ENCODE measurements at regions of chr2 and their contacts with region 1.

Region 1: DNA sequence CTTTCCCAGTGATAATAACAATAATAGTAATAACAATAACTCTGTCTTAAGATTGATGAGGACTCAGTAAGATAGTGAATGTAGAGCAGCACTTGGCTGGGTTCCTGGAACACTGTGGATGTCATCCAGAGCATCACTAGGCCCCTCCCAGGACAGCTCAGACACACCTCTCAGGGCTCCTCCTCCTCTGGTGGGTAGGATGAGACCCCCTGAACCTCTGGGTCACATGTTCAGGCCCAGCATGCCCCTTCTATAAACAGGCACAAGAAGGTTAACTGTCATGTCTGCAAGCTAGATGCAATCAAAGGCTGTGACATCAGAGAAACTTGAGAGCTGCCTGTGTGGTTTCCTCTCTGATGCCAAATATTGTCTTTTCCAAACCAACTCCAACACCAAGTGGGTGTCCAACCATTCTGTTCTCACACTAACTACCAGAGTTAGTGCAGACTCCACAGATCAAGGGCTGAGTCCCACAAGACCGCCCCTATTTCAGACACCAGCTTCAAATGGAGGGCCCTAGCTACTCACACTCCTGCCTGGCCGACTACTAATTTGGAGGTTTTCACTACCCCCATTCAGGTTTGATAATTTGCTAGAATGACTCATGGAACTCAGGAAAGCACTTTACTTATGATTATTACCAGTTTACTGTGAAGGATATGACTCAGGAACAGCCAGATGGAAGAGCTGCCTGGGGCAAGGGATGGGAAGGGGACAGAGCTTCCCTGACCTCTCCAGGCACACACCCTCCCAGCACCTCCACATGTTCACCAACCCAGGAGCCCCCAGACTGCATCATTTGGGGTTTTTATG is 46.4 kb upstream of the BZW1 start:
- DNase-seq: peak; percentile 89
- H3K4me3 ChIP-seq: no peak overlapping the region
- H3K27ac ChIP-seq: peak overlapping the region; percentile 93
- H3K4me1 ChIP-seq: peaks cover 51% of the 10 kb centered on the region
- H3K27me3 ChIP-seq: no peaks in the 10 kb centered on the region
- CTCF ChIP-seq: no peak
- POLR2A ChIP-seq: no peak

Region 2: GRCh38 chr2:200742426-200742825 is 22.9 kb before region 1 on chr2:
- CTCF ChIA-PET with region 1: interaction called, 5 read pairs
- POLR2A ChIA-PET with region 1: no interaction called
- dilution Hi-C with region 1: no loop called
- intact Hi-C with region 1: loop called (anchors 1 kb)
- DNase-seq: peak; percentile 81
- H3K4me3 ChIP-seq: no peak overlapping the region
- H3K27ac ChIP-seq: no peak overlapping the region
- H3K4me1 ChIP-seq: peaks cover 9% of the 10 kb centered on the region
- H3K27me3 ChIP-seq: no peaks in the 10 kb centered on the region
- CTCF ChIP-seq: no peak
- POLR2A ChIP-seq: no peak

Region 3: DNA sequence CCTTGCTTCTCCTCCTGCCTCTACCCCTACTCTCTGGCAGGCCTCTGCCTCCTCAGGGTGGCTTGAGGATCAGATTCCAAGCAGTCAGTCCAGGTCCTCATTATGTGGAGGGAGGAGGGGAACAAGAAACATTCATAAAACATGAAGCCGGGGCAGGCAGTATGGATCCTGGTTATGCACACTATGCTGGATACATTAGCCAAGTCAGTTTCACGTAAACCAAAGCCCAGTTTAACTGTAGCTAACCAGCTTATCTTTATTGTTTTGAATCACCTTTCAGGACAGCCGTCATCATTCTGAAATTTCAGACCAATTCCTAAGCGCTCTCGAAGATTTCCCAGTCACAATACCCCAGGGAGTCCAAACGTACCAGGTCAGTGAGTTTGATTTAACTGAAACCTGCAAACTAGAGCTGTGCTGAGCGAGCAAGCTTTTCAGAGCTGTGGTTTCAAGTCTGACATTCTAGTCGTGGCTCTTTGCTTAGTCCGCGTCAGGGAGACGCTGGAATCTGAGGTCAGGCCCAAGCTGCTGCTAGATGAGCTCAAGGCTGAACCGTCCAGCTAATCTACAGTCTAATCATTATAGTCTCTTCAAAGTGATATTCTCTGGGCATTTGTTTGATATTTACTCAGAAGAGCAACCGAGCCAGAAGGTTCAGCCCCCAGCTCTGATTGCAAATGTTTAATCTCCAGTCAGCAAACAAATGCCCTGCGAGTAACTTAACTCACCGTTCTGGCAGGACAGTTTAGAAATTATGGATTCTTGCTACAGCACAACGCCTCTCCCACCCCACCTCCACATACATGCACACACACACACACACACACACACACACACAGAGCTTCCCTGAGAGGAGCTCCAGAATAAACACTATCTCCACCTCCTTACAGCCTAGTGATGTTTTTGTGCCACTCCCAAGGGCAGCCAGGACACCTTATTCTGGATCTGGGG is 17.4 kb before region 1 on chr2:
- CTCF ChIA-PET with region 1: interaction called, 11 read pairs
- POLR2A ChIA-PET with region 1: no interaction called
- dilution Hi-C with region 1: no loop called
- intact Hi-C with region 1: no loop called
- DNase-seq: no peak
- H3K4me3 ChIP-seq: no peak overlapping the region
- H3K27ac ChIP-seq: no peak overlapping the region
- H3K4me1 ChIP-seq: peaks cover 8% of the 10 kb centered on the region
- H3K27me3 ChIP-seq: no peaks in the 10 kb centered on the region
- CTCF ChIP-seq: no peak
- POLR2A ChIP-seq: no peak

Region 4: DNA sequence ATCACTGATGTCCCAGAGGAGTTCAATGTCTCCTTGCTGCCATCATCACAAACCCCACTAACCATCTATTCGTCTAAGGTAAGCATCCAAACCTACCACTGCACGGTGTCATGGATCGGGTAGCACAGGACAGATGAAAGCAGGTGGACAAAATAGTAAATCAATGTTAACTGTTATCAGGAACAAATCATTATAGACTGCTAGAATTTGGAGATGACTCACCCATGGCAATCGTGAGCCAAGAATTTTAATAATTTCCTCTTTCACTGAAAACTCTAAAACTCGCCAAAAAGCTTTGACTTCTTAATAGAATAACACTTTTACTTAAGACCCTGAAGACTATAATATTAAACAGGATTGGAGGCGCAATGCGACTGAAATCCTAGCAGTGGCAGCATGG is 12.7 kb after region 1 on chr2:
- CTCF ChIA-PET with region 1: interaction called, 9 read pairs
- POLR2A ChIA-PET with region 1: no interaction called
- dilution Hi-C with region 1: no loop called
- intact Hi-C with region 1: loop called (anchors 1 kb)
- DNase-seq: peak; percentile 76
- H3K4me3 ChIP-seq: peak overlapping the region in 1 of 3 experiments; percentile 26
- H3K27ac ChIP-seq: peak overlapping the region; percentile 38
- H3K4me1 ChIP-seq: peaks cover 34% of the 10 kb centered on the region
- H3K27me3 ChIP-seq: no peaks in the 10 kb centered on the region
- CTCF ChIP-seq: no peak
- POLR2A ChIP-seq: no peak

Region 5: GRCh38 chr2:200787348-200788120 is 22.2 kb after region 1 on chr2:
- CTCF ChIA-PET with region 1: interaction called, 4 read pairs
- POLR2A ChIA-PET with region 1: interaction called, 5 read pairs
- dilution Hi-C with region 1: no loop called
- intact Hi-C with region 1: loop called (anchors 1 kb)
- DNase-seq: peak; percentile 95
- H3K4me3 ChIP-seq: peak overlapping the region in 1 of 3 experiments; percentile 63
- H3K27ac ChIP-seq: peak overlapping the region; percentile 99
- H3K4me1 ChIP-seq: peaks cover 43% of the 10 kb centered on the region
- H3K27me3 ChIP-seq: no peaks in the 10 kb centered on the region
- CTCF ChIP-seq: no peak
- POLR2A ChIP-seq: peak; percentile 17

Region 6: DNA sequence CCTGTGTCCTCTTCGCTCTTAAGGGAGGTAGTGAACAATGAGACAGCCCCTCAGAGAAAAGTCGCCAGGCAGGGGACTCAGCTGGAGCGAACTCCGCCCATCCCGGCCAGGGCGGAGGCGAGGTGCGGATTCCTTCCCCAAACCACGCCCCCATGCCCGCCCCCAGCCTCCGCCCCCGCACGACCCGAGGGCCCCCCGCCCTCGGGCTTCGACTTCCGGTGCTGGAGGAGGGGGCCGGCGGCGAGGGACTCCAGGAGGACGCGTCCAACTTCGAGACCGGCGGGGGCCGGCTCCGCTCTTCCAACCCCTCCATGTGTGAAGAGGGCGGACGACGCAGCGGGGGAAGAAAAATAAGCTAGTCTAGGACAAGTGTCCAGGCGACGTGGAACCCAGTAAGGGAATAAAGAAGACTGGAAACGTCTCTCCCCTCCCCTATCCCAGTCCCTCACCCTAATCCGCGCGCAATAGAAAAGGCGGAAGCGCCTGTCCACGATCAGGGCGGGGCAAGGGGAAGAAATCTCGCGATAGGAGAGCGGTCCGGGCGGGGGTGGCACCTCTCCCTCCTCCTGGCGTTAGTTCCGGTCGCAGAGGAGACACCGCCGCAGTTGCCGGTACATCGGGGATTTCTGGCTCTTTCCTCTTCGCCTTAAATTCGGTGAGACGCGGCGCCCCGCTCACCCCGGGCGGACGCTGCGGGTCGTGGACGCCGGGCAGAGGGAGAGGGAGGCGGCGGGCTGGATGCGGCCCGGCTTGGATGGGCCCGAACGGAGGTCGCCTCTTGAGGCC is 46.2 kb after region 1 on chr2 and contains the start of gene BZW1:
- CTCF ChIA-PET with region 1: interaction called, 3 read pairs
- POLR2A ChIA-PET with region 1: no interaction called
- dilution Hi-C with region 1: no loop called
- intact Hi-C with region 1: loop called (anchors 1 kb)
- DNase-seq: peak; percentile 95
- H3K4me3 ChIP-seq: peak within 1 kb of the TSS; percentile 76 to 99 (median 96)
- H3K27ac ChIP-seq: peak within 1 kb of the TSS; percentile 98
- H3K4me1 ChIP-seq: peaks cover 34% of the 10 kb centered on the region
- H3K27me3 ChIP-seq: no peaks in the 10 kb centered on the region
- CTCF ChIP-seq: no peak
- POLR2A ChIP-seq: peak; percentile 69
- total RNA-seq, gene BZW1: 347 and 353 TPM in 2 replicates

Region 7: GRCh38 chr2:200864176-200864976 is 99.0 kb after region 1 on chr2 and contains the start of gene CLK1:
- CTCF ChIA-PET with region 1: no interaction called
- POLR2A ChIA-PET with region 1: no interaction called
- dilution Hi-C with region 1: no loop called
- intact Hi-C with region 1: loop called (anchors 5 kb)
- DNase-seq: peak; percentile 95
- H3K4me3 ChIP-seq: peak within 1 kb of the TSS; percentile 90 to 99 (median 91)
- H3K27ac ChIP-seq: peak within 1 kb of the TSS; percentile 88
- H3K4me1 ChIP-seq: peaks cover 26% of the 10 kb centered on the region
- H3K27me3 ChIP-seq: no peaks in the 10 kb centered on the region
- CTCF ChIP-seq: no peak
- POLR2A ChIP-seq: peak; percentile 97
- total RNA-seq, gene CLK1: 79.7 and 92.4 TPM in 2 replicates